ENCODE measurements at regions of chr19 and their contacts with region 1.

Region 1: DNA sequence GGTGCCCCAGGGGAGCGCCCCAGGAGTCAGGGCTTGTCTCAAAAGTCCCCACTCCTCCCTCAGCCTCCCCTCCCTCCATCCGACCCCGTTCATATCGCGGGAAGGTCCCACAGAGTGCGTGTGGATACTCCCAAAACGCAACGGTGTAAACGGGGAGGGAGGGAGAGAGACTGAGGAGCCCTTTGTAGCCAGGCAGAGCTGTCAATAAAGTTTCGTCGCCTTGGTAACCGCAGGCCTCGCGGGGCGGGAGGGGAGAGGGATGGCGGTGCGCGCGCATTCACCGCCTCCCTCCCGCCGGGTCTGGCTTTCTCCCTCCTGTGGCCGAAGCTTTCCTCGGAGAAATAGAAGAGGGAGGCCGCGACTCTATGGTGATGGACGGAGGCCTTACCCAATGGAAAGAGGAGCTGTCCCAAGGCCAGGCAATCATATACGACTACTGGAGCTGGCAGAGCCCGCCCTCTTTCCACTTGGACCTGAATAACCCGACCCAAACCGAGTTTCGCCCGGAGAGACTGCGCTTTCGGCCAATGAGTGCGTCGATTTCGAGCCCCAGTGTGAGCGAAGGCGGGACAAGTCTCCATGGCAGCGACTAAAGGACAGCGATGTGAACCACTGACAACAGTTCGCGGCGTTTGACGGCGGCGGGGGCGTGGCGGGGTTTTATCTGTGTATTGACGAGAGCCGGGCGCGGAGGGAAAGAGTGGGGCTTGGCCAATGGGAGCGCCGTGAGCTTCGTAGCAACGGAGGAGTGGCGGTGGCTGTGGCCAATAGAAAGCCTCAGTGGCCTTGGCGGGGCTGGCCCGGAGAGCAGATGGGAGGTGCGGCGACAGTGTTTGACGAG is at the start of gene KMT5C:
- DNase-seq: peak; percentile 100
- ATAC-seq: peak; percentile 86
- H3K4me3 Mint-ChIP-seq: peak within 1 kb of the TSS; percentile 89
- H3K27ac Mint-ChIP-seq: peak within 1 kb of the TSS; percentile 95
- H3K4me1 Mint-ChIP-seq: peaks cover 20% of the 10 kb centered on the region
- H3K27me3 Mint-ChIP-seq: peaks cover 9% of the 10 kb centered on the region
- total RNA-seq, gene KMT5C: 21.9 to 26.7 TPM

Region 2: GRCh38 chr19:55178781-55179599 is 160.3 kb before region 1 on chr19:
- CTCF ChIA-PET with region 1: no interaction called
- POLR2A ChIA-PET with region 1: no interaction called
- DNase-seq: peak; percentile 96
- ATAC-seq: peak; percentile 83
- H3K4me3 Mint-ChIP-seq: peak overlapping the region; percentile 65
- H3K27ac Mint-ChIP-seq: peak overlapping the region; percentile 67
- H3K4me1 Mint-ChIP-seq: peaks cover 36% of the 10 kb centered on the region
- H3K27me3 Mint-ChIP-seq: peaks cover 49% of the 10 kb centered on the region

Region 3: GRCh38 chr19:55258828-55259539 is 80.3 kb before region 1 on chr19 and contains the start of gene PPP6R1:
- CTCF ChIA-PET with region 1: interaction called, 9 read pairs
- POLR2A ChIA-PET with region 1: interaction called, 16 read pairs
- DNase-seq: peak; percentile 95
- ATAC-seq: peak; percentile 76
- H3K4me3 Mint-ChIP-seq: peak within 1 kb of the TSS; percentile 91
- H3K27ac Mint-ChIP-seq: peak within 1 kb of the TSS; percentile 100
- H3K4me1 Mint-ChIP-seq: peaks cover 26% of the 10 kb centered on the region
- H3K27me3 Mint-ChIP-seq: no peaks in the 10 kb centered on the region
- total RNA-seq, gene PPP6R1: 256 to 265 TPM

Region 4: GRCh38 chr19:55289117-55289796 is 50.0 kb before region 1 on chr19:
- CTCF ChIA-PET with region 1: interaction called, 14 read pairs
- POLR2A ChIA-PET with region 1: no interaction called
- DNase-seq: no peak
- ATAC-seq: no peak
- H3K4me3 Mint-ChIP-seq: no peak overlapping the region
- H3K27ac Mint-ChIP-seq: no peak overlapping the region
- H3K4me1 Mint-ChIP-seq: peaks cover 13% of the 10 kb centered on the region
- H3K27me3 Mint-ChIP-seq: no peaks in the 10 kb centered on the region

Region 5: GRCh38 chr19:55353803-55354697 is 14.8 kb after region 1 on chr19:
- CTCF ChIA-PET with region 1: interaction called, 5 read pairs
- POLR2A ChIA-PET with region 1: interaction called, 16 read pairs
- DNase-seq: peak; percentile 75
- ATAC-seq: peak; percentile 88
- H3K4me3 Mint-ChIP-seq: peak overlapping the region; percentile 67
- H3K27ac Mint-ChIP-seq: peak overlapping the region; percentile 15
- H3K4me1 Mint-ChIP-seq: peaks cover 37% of the 10 kb centered on the region
- H3K27me3 Mint-ChIP-seq: peaks cover 42% of the 10 kb centered on the region

Region 6: DNA sequence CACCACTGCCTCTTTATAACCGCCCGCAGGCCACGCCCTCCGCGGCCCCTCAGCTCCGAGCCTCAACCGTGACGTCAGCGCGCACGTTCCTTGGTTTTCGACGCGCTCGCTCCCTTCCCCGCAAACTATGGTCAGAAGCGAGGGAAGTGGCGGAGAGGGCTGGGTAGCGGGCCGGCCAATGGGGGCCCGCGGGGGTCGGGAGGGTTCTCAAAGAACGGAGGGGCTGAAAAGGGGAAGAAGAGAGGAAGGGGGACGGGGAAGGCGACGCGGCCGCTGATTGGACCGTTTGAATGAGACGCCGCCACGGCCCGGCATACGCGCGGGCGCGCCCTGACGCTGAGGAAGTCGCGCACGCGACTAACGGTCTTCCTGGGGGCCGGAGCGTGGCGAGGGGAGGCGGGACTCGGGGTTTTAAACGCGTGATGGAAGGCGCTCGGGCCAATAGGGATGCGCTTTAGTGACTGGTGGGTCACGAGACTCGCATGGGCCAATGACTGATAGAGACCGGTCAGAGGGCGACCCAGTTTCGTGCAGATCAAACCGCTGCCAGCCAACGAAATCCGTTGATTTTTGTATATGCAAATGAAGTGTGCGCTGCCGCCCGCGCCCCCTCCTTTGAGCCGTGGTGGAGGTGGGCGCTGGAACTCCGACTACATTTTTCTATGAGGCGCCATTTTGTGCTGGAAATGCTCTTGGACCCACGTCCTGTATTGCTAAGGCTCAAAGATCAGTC is 68.7 kb after region 1 on chr19:
- CTCF ChIA-PET with region 1: interaction called, 3 read pairs
- POLR2A ChIA-PET with region 1: interaction called, 10 read pairs
- DNase-seq: peak; percentile 99
- ATAC-seq: peak; percentile 92
- H3K4me3 Mint-ChIP-seq: peak overlapping the region; percentile 96
- H3K27ac Mint-ChIP-seq: peak overlapping the region; percentile 99
- H3K4me1 Mint-ChIP-seq: peaks cover 38% of the 10 kb centered on the region
- H3K27me3 Mint-ChIP-seq: peaks cover 8% of the 10 kb centered on the region